ENCODE measurements at regions of chr16 and their contacts with region 1.

Region 1: DNA sequence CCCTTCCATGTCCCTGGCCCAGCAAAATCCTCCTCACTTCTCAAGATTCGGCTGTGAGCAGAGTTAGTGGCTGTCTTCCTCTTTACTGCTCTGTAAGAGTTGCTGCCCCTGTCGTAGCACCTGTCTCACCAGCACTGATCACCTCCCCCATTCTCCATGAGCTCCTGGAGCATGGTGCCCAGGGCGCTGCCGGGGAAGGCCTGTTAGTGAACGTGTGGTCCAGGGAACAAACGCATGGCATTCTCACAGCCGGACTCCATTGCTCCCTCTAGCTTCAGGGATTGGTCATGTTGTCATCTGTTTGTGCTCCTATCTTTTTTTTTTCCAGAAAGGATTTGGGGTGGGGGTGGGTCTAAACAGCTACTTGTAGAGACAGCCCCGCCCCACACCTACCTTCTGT is 141.2 kb downstream of the CMIP start:
- DNase-seq: peak; percentile 25
- ATAC-seq: no peak
- H3K4me3 ChIP-seq: no peak overlapping the region
- H3K27ac ChIP-seq: peak overlapping the region; percentile 95
- H3K4me1 ChIP-seq: peaks cover 65% of the 10 kb centered on the region
- H3K27me3 ChIP-seq: no peaks in the 10 kb centered on the region
- CTCF ChIP-seq: peak; percentile 52

Region 2: GRCh38 chr16:81481207-81481821 is 104.5 kb before region 1 on chr16:
- CTCF ChIA-PET with region 1: no interaction called
- POLR2A ChIA-PET with region 1: no interaction called
- intact Hi-C with region 1: no loop called
- DNase-seq: no peak
- ATAC-seq: no peak
- H3K4me3 ChIP-seq: no peak overlapping the region
- H3K27ac ChIP-seq: no peak overlapping the region
- H3K4me1 ChIP-seq: peaks cover 7% of the 10 kb centered on the region
- H3K27me3 ChIP-seq: no peaks in the 10 kb centered on the region
- CTCF ChIP-seq: no peak

Region 3: GRCh38 chr16:81513204-81514040 is 72.4 kb before region 1 on chr16:
- CTCF ChIA-PET with region 1: no interaction called
- POLR2A ChIA-PET with region 1: no interaction called
- intact Hi-C with region 1: loop called (anchors 5 kb)
- DNase-seq: no peak
- ATAC-seq: no peak
- H3K4me3 ChIP-seq: no peak overlapping the region
- H3K27ac ChIP-seq: peak overlapping the region; percentile 19; the same call in 1 of the 2 replicates
- H3K4me1 ChIP-seq: peaks cover 54% of the 10 kb centered on the region
- H3K27me3 ChIP-seq: no peaks in the 10 kb centered on the region
- CTCF ChIP-seq: no peak

Region 4: DNA sequence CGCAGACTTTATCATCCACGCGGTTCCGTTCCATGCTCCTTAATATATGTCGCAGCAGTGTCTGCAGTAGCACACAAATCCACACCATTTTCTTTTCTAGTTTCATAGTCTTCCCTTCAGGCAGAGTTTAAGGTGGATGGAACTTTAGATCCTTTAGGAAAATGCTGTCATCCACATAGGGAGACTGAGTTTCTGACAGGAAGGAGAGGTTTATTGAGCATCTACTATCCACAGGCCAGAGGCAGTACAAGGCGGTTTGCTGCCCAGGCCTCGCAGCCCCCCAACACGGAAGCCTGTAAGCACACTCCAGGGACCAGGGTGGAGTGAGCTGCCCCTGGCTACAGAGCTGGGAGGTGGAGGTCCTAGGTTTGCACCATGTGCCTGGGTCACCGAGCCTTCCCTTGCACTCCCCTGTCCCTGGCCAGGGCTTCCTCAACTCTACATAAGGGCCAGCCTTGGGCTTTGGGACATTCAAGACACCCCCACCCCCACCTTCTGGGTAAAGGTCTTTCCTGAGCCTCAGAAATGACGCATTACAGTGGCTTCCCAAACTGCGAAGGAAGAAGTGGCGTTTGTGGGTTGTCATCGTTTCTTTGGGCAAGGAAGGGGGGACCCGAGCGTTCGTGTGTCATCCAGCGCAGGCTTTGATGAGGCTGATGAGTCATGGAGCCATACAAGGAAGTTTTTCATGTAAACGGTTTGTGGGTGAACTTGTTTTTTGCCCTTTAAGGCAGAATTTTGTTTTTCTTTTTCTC is 46.8 kb after region 1 on chr16:
- CTCF ChIA-PET with region 1: no interaction called
- POLR2A ChIA-PET with region 1: no interaction called
- intact Hi-C with region 1: loop called (anchors 2 kb)
- DNase-seq: peak; percentile 85
- ATAC-seq: peak; percentile 80
- H3K4me3 ChIP-seq: no peak overlapping the region
- H3K27ac ChIP-seq: peak overlapping the region; percentile 90
- H3K4me1 ChIP-seq: peaks cover 18% of the 10 kb centered on the region
- H3K27me3 ChIP-seq: no peaks in the 10 kb centered on the region
- CTCF ChIP-seq: no peak